CD8-positive, alpha-beta T cell (primary cell): ENCODE measurements at regions of chr1 and their contacts with region 1.

Region 1: DNA sequence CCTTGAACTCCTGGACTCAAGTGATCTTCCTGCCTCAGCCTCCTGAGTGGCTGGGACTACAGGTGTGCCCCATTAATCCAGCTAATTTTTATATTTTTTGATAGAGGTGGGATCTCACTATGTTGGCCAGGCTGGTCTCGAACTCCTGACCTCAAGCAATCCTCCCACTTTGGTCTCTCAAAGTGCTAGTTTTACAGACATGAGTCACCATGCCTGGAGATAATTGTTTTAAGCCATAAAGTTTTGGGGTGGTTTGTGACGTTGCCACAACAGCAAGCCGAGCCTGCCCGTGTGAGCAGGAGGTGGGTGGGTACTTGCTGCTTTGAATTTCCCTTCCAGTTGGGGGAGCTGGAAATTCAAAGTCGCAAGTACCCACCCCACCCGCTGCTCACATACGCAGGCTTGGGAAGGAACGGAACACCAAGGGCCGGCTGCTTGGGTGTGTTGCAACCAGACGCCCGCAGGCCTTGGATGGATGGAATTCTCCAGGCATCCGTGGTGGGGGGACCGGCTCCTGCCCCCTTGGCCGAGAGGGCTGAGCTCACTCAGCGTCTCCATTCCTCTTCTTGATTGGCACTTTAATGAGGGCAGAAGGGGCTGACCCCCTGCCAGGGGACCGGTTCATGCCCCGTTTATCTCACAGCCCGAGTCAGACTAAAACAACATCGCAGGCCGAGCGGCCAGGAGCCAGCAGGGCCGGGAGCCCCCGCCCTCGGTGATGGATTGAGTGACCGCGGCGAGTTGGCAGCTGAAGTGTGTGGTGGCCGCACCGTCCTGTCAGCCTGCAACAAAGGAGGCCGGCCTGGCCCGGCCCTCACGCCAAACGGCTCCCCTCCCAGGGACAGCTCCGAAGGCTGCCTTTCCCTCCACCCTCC is 78.1 kb downstream of the DHRS3 start:
- DNase-seq: no peak
- ATAC-seq: no peak
- H3K4me3 ChIP-seq: no peak overlapping the region
- H3K4me3 Mint-ChIP-seq: no peak overlapping the region
- H3K27ac ChIP-seq: no peak overlapping the region
- H3K27ac Mint-ChIP-seq: no peak overlapping the region
- H3K4me1 ChIP-seq: no peaks in the 10 kb centered on the region
- H3K4me1 Mint-ChIP-seq: no peaks in the 10 kb centered on the region
- H3K27me3 ChIP-seq: no peaks in the 10 kb centered on the region
- H3K27me3 Mint-ChIP-seq: no peaks in the 10 kb centered on the region
- CTCF ChIP-seq: no peak

Region 2: GRCh38 chr1:12610305-12610935 is 70.5 kb after region 1 on chr1:
- CTCF ChIA-PET with region 1: no interaction called
- POLR2A ChIA-PET with region 1: no interaction called
- intact Hi-C with region 1: no loop called
- DNase-seq: no peak
- ATAC-seq: no peak
- H3K4me3 ChIP-seq: no peak overlapping the region
- H3K4me3 Mint-ChIP-seq: no peak overlapping the region
- H3K27ac ChIP-seq: no peak overlapping the region
- H3K27ac Mint-ChIP-seq: peak overlapping the region; percentile 61
- H3K4me1 ChIP-seq: peaks cover 26% of the 10 kb centered on the region
- H3K4me1 Mint-ChIP-seq: peaks cover 66% of the 10 kb centered on the region
- H3K27me3 ChIP-seq: no peaks in the 10 kb centered on the region
- H3K27me3 Mint-ChIP-seq: no peaks in the 10 kb centered on the region
- CTCF ChIP-seq: no peak

Region 3: DNA sequence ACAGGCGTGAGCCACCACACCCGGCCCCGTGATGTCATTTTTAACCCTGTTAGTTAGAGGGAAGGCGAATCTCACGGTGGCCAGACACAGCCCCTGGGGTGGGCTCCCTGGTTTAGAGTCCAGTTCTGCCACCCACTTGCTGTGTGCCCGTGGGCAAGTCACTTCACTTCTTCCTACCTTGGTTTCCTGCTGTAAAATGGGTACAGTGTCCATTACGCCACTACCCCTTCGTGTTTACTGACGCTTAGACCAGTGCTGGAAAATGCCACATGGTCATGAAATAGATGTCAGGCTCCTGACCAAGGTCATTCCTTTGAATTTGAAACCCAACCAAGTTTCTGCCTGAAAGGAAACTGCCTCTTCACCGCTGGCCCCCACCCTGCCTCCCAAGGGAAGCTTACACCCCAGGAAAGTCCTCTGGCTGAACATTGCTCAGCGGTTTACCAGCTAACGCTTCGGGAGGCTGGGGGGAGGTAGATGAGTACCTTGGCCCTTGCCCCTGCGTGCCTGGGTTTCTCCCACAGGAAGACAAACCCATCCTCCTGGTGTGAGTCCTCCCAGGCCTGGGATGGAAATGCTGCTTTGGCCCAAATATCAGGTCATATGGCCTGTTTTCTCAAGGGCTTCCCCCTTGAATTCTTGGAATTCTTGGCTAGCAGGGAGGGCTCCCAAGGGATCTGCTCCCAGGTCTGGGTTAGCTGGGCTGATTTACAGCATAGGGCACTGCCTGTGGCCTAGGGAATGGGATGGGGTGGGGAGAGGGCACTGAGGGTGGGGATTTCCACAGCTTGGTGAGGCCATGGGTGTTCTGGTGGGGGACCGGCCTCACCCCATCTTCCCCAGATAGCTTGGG is 96.4 kb after region 1 on chr1:
- CTCF ChIA-PET with region 1: no interaction called
- POLR2A ChIA-PET with region 1: no interaction called
- intact Hi-C with region 1: loop called in 1 of 2 experiments (anchors 5 kb)
- DNase-seq: no peak
- ATAC-seq: no peak
- H3K4me3 ChIP-seq: no peak overlapping the region
- H3K4me3 Mint-ChIP-seq: no peak overlapping the region
- H3K27ac ChIP-seq: no peak overlapping the region
- H3K27ac Mint-ChIP-seq: no peak overlapping the region
- H3K4me1 ChIP-seq: peaks cover 4% of the 10 kb centered on the region
- H3K4me1 Mint-ChIP-seq: peaks cover 9% of the 10 kb centered on the region
- H3K27me3 ChIP-seq: no peaks in the 10 kb centered on the region
- H3K27me3 Mint-ChIP-seq: peaks cover 17% of the 10 kb centered on the region
- CTCF ChIP-seq: no peak